ENCODE measurements at regions of chr19 and their contacts with region 1.

Region 1: DNA sequence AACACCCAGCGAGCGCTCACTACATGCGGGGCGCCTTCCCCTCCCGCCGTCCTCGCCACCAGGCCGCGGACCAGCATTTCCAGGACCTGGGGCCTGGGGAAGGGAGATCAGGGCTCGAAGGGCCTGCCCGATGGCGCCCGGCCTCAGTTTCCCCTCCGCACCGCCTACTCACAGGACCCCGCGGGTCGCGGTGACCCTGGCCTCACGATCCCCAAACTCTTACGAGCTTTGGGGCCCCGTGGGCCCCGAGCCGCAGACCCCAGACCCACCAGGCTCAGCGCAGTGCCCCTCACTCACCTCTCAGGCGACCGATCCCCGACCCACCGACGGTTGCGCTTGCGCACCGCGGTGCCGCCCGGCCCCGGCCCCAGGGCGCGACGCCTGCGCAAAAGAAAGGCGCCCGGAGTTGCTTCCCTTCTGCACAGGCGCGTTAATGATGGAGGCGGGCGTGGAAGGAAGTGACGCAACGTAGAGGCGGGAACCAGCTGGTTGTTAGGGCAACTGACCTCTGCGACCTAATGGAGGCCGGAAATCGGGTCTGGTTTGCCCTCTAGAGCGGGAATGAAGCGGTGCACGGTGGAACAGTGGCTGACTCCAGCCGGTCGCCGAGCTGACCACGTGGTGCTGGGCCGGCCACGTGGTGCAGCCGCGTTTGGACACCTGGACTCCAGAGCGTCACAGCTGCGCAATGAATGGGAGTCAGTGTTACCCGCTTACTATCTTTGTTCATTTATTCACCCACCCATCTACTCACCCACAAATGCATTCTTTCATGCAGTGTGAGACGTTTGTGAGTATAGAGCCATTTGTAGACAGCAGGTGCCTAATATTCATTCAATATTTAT is at the start of gene SGTA:
- DNase-seq: peak; percentile 99
- H3K4me3 Mint-ChIP-seq: peak within 1 kb of the TSS; percentile 89
- H3K27ac Mint-ChIP-seq: peak within 1 kb of the TSS; percentile 91
- H3K4me1 Mint-ChIP-seq: peaks cover 57% of the 10 kb centered on the region
- H3K27me3 Mint-ChIP-seq: no peaks in the 10 kb centered on the region
- total RNA-seq, gene SGTA: 45.6 to 46.2 TPM

Region 2: DNA sequence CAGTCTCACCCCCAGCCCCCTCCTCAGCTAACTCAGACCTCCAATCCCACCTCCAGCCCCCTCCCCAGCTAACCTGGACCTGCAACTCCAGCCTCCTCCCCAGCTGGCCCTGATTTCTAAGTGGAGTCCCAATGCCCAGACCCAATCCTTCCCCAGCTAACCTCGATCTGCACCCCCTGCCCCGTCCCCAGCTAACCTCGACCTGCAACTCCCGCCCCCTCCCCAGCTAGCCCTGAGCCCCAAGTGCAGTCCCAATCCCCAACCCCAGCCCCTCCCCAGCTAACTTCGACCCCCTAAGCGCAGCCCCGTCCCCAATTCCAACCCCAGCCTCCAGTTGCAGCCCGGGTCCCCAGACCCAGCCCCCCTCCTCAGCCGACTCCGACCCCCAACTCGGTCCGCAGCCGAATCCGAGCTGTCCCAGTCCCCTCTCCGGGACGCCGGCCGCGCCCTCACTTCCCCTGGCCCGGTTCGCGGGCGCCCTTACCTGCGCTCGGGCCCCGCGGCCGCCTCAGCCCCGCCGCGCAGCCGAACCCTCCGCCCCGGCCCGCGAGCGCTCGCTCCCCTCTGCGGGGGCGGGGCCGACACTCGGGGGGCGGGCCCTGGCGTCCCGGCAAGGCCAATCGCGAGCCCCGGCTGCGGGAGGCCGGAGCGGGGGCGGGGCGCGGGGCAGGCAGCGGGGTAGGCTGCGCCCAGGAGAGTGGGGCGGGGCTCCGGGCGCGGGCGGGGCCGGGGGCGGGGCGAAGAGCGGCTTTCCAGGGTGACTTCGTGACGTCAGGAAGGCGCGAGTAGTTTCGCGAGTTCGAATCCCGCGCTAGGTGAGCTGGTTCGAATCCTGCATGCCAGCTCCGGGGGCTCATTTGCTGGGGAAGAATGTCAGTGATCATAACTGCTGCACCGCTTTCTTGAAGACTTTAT is 80.7 kb before region 1 on chr19 and contains the start of gene GNG7:
- CTCF ChIA-PET with region 1: interaction called, 3 read pairs
- POLR2A ChIA-PET with region 1: interaction called, 3 read pairs
- intact Hi-C with region 1: loop called (anchors 1 kb)
- DNase-seq: peak; percentile 97
- H3K4me3 Mint-ChIP-seq: peak within 1 kb of the TSS; percentile 54
- H3K27ac Mint-ChIP-seq: no peak within 1 kb of the TSS
- H3K4me1 Mint-ChIP-seq: peaks cover 20% of the 10 kb centered on the region
- H3K27me3 Mint-ChIP-seq: no peaks in the 10 kb centered on the region
- total RNA-seq, gene GNG7: 0.53 to 0.88 TPM

Region 3: GRCh38 chr19:2820112-2820702 is 37.0 kb after region 1 on chr19:
- CTCF ChIA-PET with region 1: interaction called, 4 read pairs
- POLR2A ChIA-PET with region 1: no interaction called
- intact Hi-C with region 1: loop called (anchors 2 kb)
- DNase-seq: peak; percentile 20
- H3K4me3 Mint-ChIP-seq: peak overlapping the region; percentile 79
- H3K27ac Mint-ChIP-seq: no peak overlapping the region
- H3K4me1 Mint-ChIP-seq: peaks cover 9% of the 10 kb centered on the region
- H3K27me3 Mint-ChIP-seq: no peaks in the 10 kb centered on the region

Region 4: DNA sequence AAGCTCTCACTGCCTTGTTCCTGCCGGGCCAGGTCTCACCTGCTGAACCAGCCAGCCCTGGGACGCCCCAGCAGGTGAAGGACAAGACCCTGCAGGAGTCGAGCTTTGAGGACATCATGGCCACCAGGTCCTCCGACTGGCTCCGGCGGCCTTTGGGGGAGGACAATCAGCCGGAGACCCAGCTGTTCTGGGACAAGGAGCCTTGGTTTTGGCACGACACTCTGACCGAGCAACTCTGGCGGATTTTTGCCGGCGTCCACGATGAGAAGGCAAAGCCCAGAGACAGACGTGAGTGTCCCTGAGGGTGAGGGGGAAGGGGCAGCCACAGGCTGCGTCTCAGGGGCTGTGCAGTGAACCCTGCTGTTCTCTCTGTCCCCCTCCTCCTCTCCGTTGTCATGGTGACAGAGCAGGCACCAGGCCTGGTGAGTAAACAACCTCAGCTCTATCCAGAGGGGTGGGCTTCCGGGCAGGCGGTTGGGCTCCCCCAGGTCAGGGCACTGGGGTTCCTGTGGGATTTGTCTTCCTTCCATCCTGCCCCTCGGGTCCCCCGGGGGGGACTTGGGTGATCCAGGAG is 203.9 kb after region 1 on chr19:
- CTCF ChIA-PET with region 1: no interaction called
- POLR2A ChIA-PET with region 1: no interaction called
- intact Hi-C with region 1: no loop called
- DNase-seq: no peak
- H3K4me3 Mint-ChIP-seq: no peak overlapping the region
- H3K27ac Mint-ChIP-seq: no peak overlapping the region
- H3K4me1 Mint-ChIP-seq: peaks cover 6% of the 10 kb centered on the region
- H3K27me3 Mint-ChIP-seq: peaks cover 10% of the 10 kb centered on the region

Region 5: DNA sequence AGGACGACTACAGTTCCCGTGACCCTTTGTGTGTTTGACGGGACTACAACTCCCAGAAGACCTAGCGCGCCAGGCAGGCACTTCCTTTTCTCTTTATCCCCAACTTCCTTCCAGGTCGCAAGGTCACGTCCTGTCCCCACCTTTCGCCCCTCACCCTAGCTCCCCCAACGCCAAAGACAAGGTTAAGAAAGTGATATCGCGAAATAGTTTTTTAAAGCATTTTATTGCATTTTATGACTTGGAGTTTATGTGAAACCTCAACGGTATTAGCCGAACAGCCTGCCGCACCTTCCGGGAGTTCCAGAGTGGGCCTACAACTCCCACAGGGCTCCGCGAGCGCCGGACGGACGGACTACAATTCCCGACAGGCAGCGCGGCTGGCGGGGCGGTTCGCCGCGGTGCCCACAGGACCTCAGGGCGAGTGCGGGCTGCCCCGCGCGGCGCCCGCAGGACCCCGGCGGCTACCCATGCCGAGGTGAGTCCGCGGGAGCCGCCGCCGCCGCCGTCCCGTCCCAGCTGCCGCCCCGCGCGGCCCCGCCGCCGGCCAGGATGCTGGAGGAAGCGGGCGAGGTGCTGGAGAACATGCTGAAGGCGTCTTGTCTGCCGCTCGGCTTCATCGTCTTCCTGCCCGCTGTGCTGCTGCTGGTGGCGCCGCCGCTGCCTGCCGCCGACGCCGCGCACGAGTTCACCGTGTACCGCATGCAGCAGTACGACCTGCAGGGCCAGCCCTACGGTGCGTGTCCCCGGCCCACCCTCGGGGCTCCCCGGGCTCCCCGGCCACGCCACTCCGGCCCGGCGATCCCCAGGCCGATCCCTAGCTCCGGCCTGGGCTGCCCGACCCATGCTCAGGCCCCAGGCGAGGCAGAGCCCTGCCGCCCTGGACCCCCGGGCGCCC is 402.6 kb after region 1 on chr19 and contains the start of gene NCLN:
- CTCF ChIA-PET with region 1: no interaction called
- POLR2A ChIA-PET with region 1: no interaction called
- intact Hi-C with region 1: loop called (anchors 1 kb)
- DNase-seq: peak; percentile 94
- H3K4me3 Mint-ChIP-seq: peak within 1 kb of the TSS; percentile 97
- H3K27ac Mint-ChIP-seq: peak within 1 kb of the TSS; percentile 99
- H3K4me1 Mint-ChIP-seq: peaks cover 57% of the 10 kb centered on the region
- H3K27me3 Mint-ChIP-seq: no peaks in the 10 kb centered on the region
- total RNA-seq, gene NCLN: 47.0 to 50.9 TPM